ENCODE measurements at regions of chr19 and their contacts with region 1.

Region 1: DNA sequence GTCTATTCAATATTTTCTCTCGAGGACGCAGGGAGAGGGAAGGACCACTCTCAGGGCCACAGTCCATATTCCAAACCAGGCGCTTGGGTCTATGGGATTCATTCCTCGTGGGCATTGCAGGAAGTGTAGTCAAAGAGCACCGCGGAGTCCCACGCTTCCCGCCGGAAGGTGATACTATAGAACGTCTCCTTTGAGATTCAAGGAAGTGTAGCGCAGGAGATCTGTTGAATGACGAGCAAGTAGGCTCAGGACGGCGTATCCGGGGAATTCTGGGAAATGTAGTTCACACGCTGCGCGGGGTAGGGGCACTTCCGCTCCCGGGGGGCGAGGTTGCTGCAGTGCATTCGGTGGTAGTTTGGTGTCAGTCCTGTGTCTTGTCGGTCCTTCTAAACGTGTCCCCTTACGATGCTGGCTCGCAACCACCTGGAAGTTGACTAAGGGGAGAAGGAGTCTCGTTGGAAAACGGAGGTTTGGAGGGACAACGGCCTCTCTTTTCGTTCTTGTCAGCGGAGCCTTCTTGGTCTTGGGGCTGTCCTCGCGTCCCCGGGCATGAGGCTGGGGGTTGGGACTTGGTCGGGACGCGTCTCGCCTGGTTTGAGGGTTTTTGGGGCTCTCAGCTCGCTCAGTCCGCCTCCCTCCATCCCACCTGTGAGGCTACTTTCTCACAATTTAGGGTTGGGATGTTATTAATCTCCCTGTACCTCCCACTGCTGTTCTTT is at the start of gene ZNF284:
- DNase-seq: peak; percentile 89
- ATAC-seq: peak; percentile 100
- H3K4me3 ChIP-seq: peak within 1 kb of the TSS; percentile 68 to 89 (median 76)
- H3K4me3 Mint-ChIP-seq: peak within 1 kb of the TSS; percentile 89
- H3K27ac ChIP-seq: peak within 1 kb of the TSS; percentile 32 to 47
- H3K27ac Mint-ChIP-seq: peak within 1 kb of the TSS; percentile 76
- H3K4me1 ChIP-seq: peaks cover 13 to 16% of the 10 kb centered on the region in 2 donors
- H3K4me1 Mint-ChIP-seq: peaks cover 25% of the 10 kb centered on the region
- H3K27me3 ChIP-seq: no peaks in the 10 kb centered on the region
- H3K27me3 Mint-ChIP-seq: no peaks in the 10 kb centered on the region
- CTCF ChIP-seq: no peak
- total RNA-seq, gene ZNF284: 3.3 and 4.9 TPM in 2 replicates

Region 2: GRCh38 chr19:43704002-43704705 is 367.8 kb before region 1 on chr19:
- CTCF ChIA-PET with region 1: no interaction called
- POLR2A ChIA-PET with region 1: no interaction called
- intact Hi-C with region 1: no loop called
- DNase-seq: no peak
- ATAC-seq: no peak
- H3K4me3 ChIP-seq: no peak overlapping the region
- H3K4me3 Mint-ChIP-seq: no peak overlapping the region
- H3K27ac ChIP-seq: no peak overlapping the region
- H3K27ac Mint-ChIP-seq: peak overlapping the region; percentile 41
- H3K4me1 ChIP-seq: peaks cover 25 to 26% of the 10 kb centered on the region in 2 donors
- H3K4me1 Mint-ChIP-seq: peaks cover 25% of the 10 kb centered on the region
- H3K27me3 ChIP-seq: peaks cover 0 to 12% (median 2%) of the 10 kb centered on the region in 4 experiments
- H3K27me3 Mint-ChIP-seq: peaks cover 17% of the 10 kb centered on the region
- CTCF ChIP-seq: no peak

Region 3: DNA sequence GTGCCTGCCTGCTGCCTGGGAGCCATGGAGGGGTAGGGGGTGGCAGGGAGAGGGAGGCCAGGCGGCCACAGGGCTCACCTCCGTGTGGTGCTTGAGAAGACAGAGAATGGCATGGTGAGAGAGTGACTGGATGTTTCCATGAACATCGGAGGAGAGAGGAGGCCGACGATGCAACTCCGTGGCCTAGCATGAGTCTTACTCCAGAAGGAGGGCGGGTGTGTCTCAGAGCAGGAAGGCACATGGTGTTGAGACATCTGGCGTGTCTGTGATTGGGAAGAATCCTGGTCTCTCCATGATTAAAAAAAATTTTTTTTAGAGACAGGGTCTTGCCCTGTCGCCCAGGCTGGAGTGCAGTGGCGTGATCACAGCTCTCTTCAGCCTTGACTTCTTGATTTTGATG is 351.0 kb before region 1 on chr19:
- CTCF ChIA-PET with region 1: no interaction called
- POLR2A ChIA-PET with region 1: no interaction called
- intact Hi-C with region 1: no loop called
- DNase-seq: no peak
- ATAC-seq: no peak
- H3K4me3 ChIP-seq: no peak overlapping the region
- H3K4me3 Mint-ChIP-seq: no peak overlapping the region
- H3K27ac ChIP-seq: no peak overlapping the region
- H3K27ac Mint-ChIP-seq: no peak overlapping the region
- H3K4me1 ChIP-seq: peaks cover 18 to 21% of the 10 kb centered on the region in 2 donors
- H3K4me1 Mint-ChIP-seq: peaks cover 13% of the 10 kb centered on the region
- H3K27me3 ChIP-seq: no peaks in the 10 kb centered on the region
- H3K27me3 Mint-ChIP-seq: no peaks in the 10 kb centered on the region
- CTCF ChIP-seq: no peak

Region 4: DNA sequence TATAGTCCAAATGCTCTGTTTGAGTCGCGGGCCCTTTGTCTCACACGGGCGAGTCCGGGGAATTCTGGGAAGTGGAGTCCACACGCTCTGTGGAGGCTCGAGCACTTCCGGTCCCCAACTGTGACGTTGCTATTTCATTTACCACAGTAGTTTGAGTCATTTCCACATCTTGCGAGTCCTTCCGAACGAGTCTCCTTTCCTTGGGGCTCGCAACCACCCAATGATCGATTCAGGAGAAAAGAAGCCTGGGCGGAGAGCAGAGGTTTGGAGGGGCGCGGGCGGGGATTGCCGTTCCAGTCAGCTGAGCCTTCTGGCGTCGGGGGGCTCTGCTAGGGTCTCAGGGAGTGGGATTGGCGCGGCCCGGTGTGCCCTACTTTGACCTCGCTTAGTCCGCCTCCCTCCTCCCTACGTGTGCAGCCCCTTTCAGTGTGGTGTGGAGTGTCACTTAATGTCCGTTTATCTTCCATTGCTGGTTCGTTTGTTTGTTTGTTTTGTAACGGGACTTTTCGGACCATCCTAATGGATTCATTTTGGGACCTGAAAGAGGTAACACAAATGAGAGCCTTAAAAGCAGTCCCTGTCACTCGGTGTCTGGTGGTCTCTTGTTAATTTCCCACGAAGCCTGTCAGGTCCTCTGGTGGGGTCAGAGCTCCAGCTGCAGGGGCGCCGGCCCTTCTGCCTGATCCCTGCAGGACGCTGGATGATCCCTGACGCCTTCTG is 46.6 kb before region 1 on chr19 and contains the start of gene ZNF222:
- CTCF ChIA-PET with region 1: no interaction called
- POLR2A ChIA-PET with region 1: no interaction called
- intact Hi-C with region 1: loop called (anchors 1 kb)
- DNase-seq: peak; percentile 83
- ATAC-seq: peak; percentile 97
- H3K4me3 ChIP-seq: peak within 1 kb of the TSS; percentile 72 to 98 (median 84)
- H3K4me3 Mint-ChIP-seq: peak within 1 kb of the TSS; percentile 96
- H3K27ac ChIP-seq: peak within 1 kb of the TSS; percentile 38 to 66
- H3K27ac Mint-ChIP-seq: peak within 1 kb of the TSS; percentile 88
- H3K4me1 ChIP-seq: peaks cover 11 to 13% of the 10 kb centered on the region in 2 donors
- H3K4me1 Mint-ChIP-seq: peaks cover 19% of the 10 kb centered on the region
- H3K27me3 ChIP-seq: no peaks in the 10 kb centered on the region
- H3K27me3 Mint-ChIP-seq: peaks cover 8% of the 10 kb centered on the region
- CTCF ChIP-seq: no peak
- total RNA-seq, gene ZNF222: 7.5 and 9.1 TPM in 2 replicates

Region 5: DNA sequence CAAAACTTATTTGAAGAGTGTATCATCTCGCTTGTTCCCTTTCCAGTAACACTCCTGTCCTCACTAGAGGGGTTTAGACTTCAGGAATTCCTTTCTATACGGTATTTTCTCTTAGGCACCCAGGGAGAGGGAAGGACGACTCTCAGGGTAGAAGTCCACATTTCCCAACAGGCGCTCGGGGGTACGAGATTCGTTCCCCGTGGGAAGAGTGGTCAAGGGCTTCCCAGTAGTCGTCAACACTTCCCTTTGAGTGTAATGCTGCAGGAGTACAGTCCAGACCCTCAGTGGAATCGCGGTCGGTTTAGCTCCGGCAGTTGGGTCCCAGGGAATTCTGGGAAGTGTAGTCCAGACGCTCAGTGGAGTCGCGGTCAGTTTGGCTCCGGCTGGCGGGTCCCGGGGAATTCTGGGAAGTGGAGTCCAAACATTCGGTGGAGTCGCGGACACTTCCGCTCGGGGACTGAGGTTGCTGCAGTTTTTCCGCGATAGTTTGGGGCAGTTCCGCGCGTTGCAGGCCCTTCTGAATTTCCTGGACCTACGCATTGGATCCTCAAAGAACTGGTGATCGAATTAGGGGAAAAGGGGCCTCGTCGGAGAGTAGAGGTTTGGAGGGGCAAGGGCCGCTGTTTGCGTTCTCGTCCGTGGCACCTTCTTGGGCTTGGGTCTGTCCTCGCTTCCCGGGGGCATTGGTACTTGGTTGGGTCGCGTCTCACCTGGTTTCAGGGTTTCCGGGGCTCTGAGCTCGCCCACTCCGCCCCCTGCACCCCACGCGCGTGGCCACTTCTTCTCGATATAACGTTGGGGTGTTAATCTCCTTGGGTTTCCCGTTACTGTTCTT is 22.2 kb after region 1 on chr19 and contains the start of gene ZNF224:
- CTCF ChIA-PET with region 1: interaction called, 3 read pairs
- POLR2A ChIA-PET with region 1: no interaction called
- intact Hi-C with region 1: loop called (anchors 1 kb)
- DNase-seq: peak; percentile 87
- ATAC-seq: peak; percentile 94
- H3K4me3 ChIP-seq: peak within 1 kb of the TSS; percentile 67 to 95 (median 89)
- H3K4me3 Mint-ChIP-seq: peak within 1 kb of the TSS; percentile 96
- H3K27ac ChIP-seq: peak within 1 kb of the TSS; percentile 39 to 70
- H3K27ac Mint-ChIP-seq: peak within 1 kb of the TSS; percentile 90
- H3K4me1 ChIP-seq: peaks cover 4 to 9% of the 10 kb centered on the region in 2 donors
- H3K4me1 Mint-ChIP-seq: peaks cover 22% of the 10 kb centered on the region
- H3K27me3 ChIP-seq: no peaks in the 10 kb centered on the region
- H3K27me3 Mint-ChIP-seq: no peaks in the 10 kb centered on the region
- CTCF ChIP-seq: no peak
- total RNA-seq, gene ZNF224: 94.2 and 96.1 TPM in 2 replicates

Region 6: DNA sequence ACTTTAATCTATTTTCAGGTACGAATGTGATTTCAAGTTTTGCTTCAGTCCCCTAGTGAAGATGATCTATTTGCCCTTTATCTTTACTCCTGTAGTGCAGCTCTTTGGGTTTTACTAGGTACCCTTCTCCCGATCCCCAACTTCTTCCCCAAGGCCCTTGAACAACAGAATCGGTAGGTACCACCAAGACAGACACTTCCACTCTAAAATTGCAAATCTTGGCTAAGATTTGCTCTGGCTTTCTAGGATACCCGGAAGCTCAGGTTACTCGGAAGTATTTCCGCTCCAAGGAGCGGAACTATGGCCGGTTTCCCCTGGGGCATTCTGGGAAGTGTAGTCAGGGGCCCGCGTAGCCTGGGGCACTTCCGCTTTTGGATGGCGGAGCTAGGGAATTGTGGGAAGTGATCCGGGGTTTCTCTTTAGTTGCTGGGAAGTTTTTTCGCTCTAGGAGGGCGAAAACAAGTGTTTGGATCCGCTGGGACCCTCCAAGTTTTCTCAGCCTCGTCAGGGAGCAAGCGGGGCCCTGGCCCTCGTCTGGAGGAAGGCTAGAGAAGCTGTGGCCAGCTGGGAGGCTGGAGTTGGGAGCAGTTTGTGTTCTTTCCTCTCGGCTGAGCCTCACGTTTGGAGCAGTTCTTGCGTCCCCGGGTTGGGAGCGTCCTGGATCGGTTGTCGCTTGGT is 135.3 kb after region 1 on chr19:
- CTCF ChIA-PET with region 1: no interaction called
- POLR2A ChIA-PET with region 1: interaction called, 9 read pairs
- intact Hi-C with region 1: loop called (anchors 1 kb)
- DNase-seq: peak; percentile 91
- ATAC-seq: peak; percentile 91
- H3K4me3 ChIP-seq: peak overlapping the region; percentile 70 to 93 (median 88)
- H3K4me3 Mint-ChIP-seq: peak overlapping the region; percentile 88
- H3K27ac ChIP-seq: peak overlapping the region; percentile 71 to 86
- H3K27ac Mint-ChIP-seq: peak overlapping the region; percentile 92
- H3K4me1 ChIP-seq: peaks cover 4 to 7% of the 10 kb centered on the region in 2 donors
- H3K4me1 Mint-ChIP-seq: peaks cover 11% of the 10 kb centered on the region
- H3K27me3 ChIP-seq: no peaks in the 10 kb centered on the region
- H3K27me3 Mint-ChIP-seq: peaks cover 13% of the 10 kb centered on the region
- CTCF ChIP-seq: no peak

Region 7: DNA sequence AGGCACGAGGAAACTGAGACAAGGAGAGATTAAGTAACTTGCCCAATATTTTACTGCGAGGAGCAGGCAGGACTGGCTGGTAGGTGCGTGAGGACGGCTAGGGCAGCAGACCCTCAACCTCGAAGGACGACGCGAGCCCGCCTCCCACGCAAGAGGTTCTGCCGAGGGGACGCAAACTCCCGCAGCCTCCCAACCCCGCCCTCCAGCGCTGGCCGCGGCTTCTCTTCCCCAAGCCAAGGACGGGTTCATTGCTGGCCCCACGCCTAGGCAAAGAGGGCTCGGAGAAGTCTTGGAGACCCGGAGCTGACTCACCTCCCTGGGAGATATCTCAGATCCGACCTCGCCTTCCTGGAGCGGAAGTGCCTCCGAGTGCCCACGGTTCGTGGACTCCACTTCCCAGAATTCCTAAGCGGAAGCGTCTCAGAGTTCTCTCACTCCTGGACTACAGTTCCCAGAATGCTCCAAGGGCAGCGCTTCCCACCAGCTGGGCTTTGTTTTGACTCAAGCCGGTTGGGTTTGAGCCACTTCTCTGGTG is 232.7 kb after region 1 on chr19 and contains the start of gene ZNF235:
- CTCF ChIA-PET with region 1: no interaction called
- POLR2A ChIA-PET with region 1: no interaction called
- intact Hi-C with region 1: loop called (anchors 1 kb)
- DNase-seq: peak; percentile 82
- ATAC-seq: peak; percentile 98
- H3K4me3 ChIP-seq: peak within 1 kb of the TSS; percentile 69 to 87 (median 79)
- H3K4me3 Mint-ChIP-seq: peak within 1 kb of the TSS; percentile 96
- H3K27ac ChIP-seq: peak within 1 kb of the TSS; percentile 20 to 72
- H3K27ac Mint-ChIP-seq: peak within 1 kb of the TSS; percentile 91
- H3K4me1 ChIP-seq: peaks cover 9 to 15% of the 10 kb centered on the region in 2 donors
- H3K4me1 Mint-ChIP-seq: peaks cover 24% of the 10 kb centered on the region
- H3K27me3 ChIP-seq: no peaks in the 10 kb centered on the region
- H3K27me3 Mint-ChIP-seq: peaks cover 9% of the 10 kb centered on the region
- CTCF ChIP-seq: no peak
- total RNA-seq, gene ZNF235: 18.8 and 19.5 TPM in 2 replicates